ENCODE measurements at regions of chr5 and their contacts with region 1.

Region 1: GRCh38 chr5:141524604-141525597 is 36.0 kb downstream of the PCDHGC5 start:
- DNase-seq: peak; percentile 54
- ATAC-seq: peak; percentile 72
- H3K4me3 Mint-ChIP-seq: no peak overlapping the region
- H3K27ac Mint-ChIP-seq: peak overlapping the region; percentile 56
- H3K4me1 Mint-ChIP-seq: peaks cover 44% of the 10 kb centered on the region
- H3K27me3 Mint-ChIP-seq: no peaks in the 10 kb centered on the region
- CTCF ChIP-seq: peak; percentile 99

Region 2: DNA sequence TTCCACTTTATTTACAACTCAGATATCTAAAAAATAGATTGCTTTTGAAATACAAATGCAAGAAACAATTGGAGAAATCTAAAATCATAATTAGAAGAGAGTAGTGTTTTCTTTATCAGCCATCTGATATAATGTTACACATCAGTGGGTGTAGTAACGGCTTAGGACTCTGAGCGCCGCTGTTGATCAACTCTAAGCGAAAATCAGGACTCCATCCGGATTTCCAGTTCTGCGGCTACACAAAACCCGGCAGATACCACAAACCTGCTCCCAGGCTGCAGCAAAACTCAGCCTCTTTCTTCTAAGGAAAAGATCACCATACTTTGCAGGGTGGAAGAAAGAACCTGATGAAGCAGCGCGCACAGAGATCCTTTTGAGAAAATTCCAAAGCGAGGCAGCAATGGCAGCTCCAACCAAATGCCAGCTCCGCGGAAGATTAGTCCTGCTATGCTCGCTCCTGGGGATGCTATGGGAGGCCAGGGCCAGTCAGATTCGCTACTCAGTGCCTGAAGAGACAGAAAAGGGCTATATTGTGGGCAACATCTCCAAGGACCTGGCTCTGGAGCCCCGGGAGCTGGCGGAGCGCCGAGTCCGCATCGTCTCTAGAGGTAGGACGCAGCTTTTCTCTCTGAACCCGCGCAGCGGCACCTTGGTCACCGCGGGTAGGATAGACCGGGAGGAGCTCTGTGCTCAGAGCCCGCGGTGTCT is 122.2 kb before region 1 on chr5 and contains the start of gene PCDHGA9:
- CTCF ChIA-PET with region 1: interaction called, 13 read pairs
- POLR2A ChIA-PET with region 1: no interaction called
- intact Hi-C with region 1: no loop called
- DNase-seq: peak; percentile 42
- ATAC-seq: peak; percentile 42
- H3K4me3 Mint-ChIP-seq: no peak within 1 kb of the TSS
- H3K27ac Mint-ChIP-seq: no peak within 1 kb of the TSS
- H3K4me1 Mint-ChIP-seq: no peaks in the 10 kb centered on the region
- H3K27me3 Mint-ChIP-seq: peaks cover 62% of the 10 kb centered on the region
- CTCF ChIP-seq: peak; percentile 47
- total RNA-seq, gene PCDHGA9: 0.09 TPM in 1 of 2 experiments, not detected in the other

Region 3: GRCh38 chr5:141420855-141421496 is 103.9 kb before region 1 on chr5 and contains the start of gene PCDHGA11:
- CTCF ChIA-PET with region 1: interaction called, 30 read pairs
- POLR2A ChIA-PET with region 1: no interaction called
- intact Hi-C with region 1: no loop called
- DNase-seq: peak; percentile 69
- ATAC-seq: peak; percentile 61
- H3K4me3 Mint-ChIP-seq: peak within 1 kb of the TSS; percentile 74
- H3K27ac Mint-ChIP-seq: no peak within 1 kb of the TSS
- H3K4me1 Mint-ChIP-seq: peaks cover 8% of the 10 kb centered on the region
- H3K27me3 Mint-ChIP-seq: peaks cover 72% of the 10 kb centered on the region
- CTCF ChIP-seq: peak; percentile 76
- total RNA-seq, gene PCDHGA11: not detected

Region 4: GRCh38 chr5:141430332-141431113 is 94.4 kb before region 1 on chr5 and contains the start of gene PCDHGA12:
- CTCF ChIA-PET with region 1: interaction called, 40 read pairs
- POLR2A ChIA-PET with region 1: no interaction called
- intact Hi-C with region 1: no loop called
- DNase-seq: peak; percentile 63
- ATAC-seq: peak; percentile 83
- H3K4me3 Mint-ChIP-seq: peak within 1 kb of the TSS; percentile 35
- H3K27ac Mint-ChIP-seq: no peak within 1 kb of the TSS
- H3K4me1 Mint-ChIP-seq: peaks cover 5% of the 10 kb centered on the region
- H3K27me3 Mint-ChIP-seq: peaks cover 58% of the 10 kb centered on the region
- CTCF ChIP-seq: peak; percentile 36
- total RNA-seq, gene PCDHGA12: not detected

Region 5: DNA sequence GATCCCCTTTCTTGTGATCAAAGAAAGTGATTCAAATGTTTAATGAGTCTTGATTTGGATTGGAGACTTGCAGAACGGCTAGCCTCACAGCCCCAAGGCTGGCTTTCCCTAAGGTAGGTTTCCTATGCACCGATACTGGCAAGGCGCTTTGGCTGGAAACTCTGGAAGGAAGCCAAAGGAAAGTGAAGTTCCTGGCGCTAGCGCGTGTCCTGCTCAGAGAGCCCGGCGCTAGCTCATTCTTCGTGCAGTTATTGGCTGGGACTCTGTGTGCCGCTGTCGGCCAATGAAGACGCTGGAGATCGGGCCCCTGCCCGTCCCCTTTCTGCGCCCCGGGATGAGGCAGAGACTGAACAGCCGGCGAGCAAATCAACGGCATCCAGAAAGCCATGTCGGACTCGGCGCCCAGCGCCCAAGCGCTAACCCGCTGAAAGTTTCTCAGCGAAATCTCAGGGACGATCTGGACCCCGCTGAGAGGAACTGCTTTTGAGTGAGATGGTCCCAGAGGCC is 49.2 kb before region 1 on chr5 and contains the start of gene PCDHGC3:
- CTCF ChIA-PET with region 1: interaction called, 28 read pairs
- POLR2A ChIA-PET with region 1: no interaction called
- intact Hi-C with region 1: no loop called
- DNase-seq: peak; percentile 69
- ATAC-seq: peak; percentile 91
- H3K4me3 Mint-ChIP-seq: peak within 1 kb of the TSS; percentile 77
- H3K27ac Mint-ChIP-seq: no peak within 1 kb of the TSS
- H3K4me1 Mint-ChIP-seq: peaks cover 25% of the 10 kb centered on the region
- H3K27me3 Mint-ChIP-seq: peaks cover 52% of the 10 kb centered on the region
- CTCF ChIP-seq: peak; percentile 24
- total RNA-seq, gene PCDHGC3: not detected

Measured in activated CD8-positive, alpha-beta T cell treated with anti-CD3 and anti-CD28 coated beads for 36 hours (primary cell).